ENCODE measurements at regions of chr9 and their contacts with region 1.

Region 1: GRCh38 chr9:115591584-115591984 is 473.6 kb upstream of the TNC start:
- DNase-seq: peak; percentile 95
- ATAC-seq: peak; percentile 90
- H3K4me3 ChIP-seq: no peak overlapping the region
- H3K27ac ChIP-seq: peak overlapping the region; percentile 87
- H3K4me1 ChIP-seq: peaks cover 47% of the 10 kb centered on the region
- H3K27me3 ChIP-seq: no peaks in the 10 kb centered on the region
- CTCF ChIP-seq: peak; percentile 88

Region 2: DNA sequence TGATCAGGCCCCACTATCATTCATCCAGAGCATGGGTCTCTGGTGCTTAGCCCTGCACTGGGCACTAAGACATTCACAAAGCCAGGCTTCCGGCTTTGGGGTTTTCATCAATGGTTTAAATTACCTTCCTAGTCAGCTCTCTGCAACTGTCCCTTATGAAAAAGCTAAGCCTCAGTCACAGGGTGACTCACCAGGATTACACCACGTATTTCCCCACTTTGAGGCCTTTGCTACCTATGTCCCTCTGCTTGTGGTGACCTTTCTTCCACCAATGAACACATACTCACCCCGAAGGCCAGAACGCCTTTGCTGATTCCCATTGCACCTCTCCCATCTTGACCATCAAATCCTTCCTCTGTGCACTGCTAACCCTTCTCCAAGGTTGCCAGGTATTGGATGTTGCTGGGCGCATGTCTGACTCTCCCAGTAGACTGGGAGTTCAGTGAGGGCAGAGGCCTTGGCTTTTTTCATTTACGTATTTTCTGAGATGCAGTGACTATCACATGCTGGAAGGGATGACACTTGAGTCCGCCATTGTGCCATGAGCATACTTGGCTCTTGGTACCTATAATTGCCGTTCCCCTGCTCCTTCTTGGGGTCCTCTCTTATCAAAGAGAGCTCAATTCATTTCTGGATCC is 602.5 kb before region 1 on chr9:
- CTCF ChIA-PET with region 1: no interaction called
- POLR2A ChIA-PET with region 1: no interaction called
- intact Hi-C with region 1: no loop called
- DNase-seq: peak; percentile 80
- ATAC-seq: peak; percentile 92
- H3K4me3 ChIP-seq: no peak overlapping the region
- H3K27ac ChIP-seq: peak overlapping the region; percentile 49
- H3K4me1 ChIP-seq: peaks cover 14% of the 10 kb centered on the region
- H3K27me3 ChIP-seq: no peaks in the 10 kb centered on the region
- CTCF ChIP-seq: no peak

Region 3: GRCh38 chr9:115540091-115540490 is 51.5 kb before region 1 on chr9:
- CTCF ChIA-PET with region 1: no interaction called
- POLR2A ChIA-PET with region 1: no interaction called
- intact Hi-C with region 1: no loop called
- DNase-seq: peak; percentile 5
- ATAC-seq: no peak
- H3K4me3 ChIP-seq: no peak overlapping the region
- H3K27ac ChIP-seq: no peak overlapping the region
- H3K4me1 ChIP-seq: no peaks in the 10 kb centered on the region
- H3K27me3 ChIP-seq: no peaks in the 10 kb centered on the region
- CTCF ChIP-seq: no peak

Region 4: GRCh38 chr9:115657695-115658094 is 66.1 kb after region 1 on chr9:
- CTCF ChIA-PET with region 1: no interaction called
- POLR2A ChIA-PET with region 1: no interaction called
- intact Hi-C with region 1: loop called (anchors 5 kb)
- DNase-seq: no peak
- ATAC-seq: peak; percentile 71
- H3K4me3 ChIP-seq: no peak overlapping the region
- H3K27ac ChIP-seq: no peak overlapping the region
- H3K4me1 ChIP-seq: no peaks in the 10 kb centered on the region
- H3K27me3 ChIP-seq: no peaks in the 10 kb centered on the region
- CTCF ChIP-seq: no peak

Region 5: GRCh38 chr9:115694014-115694413 is 102.4 kb after region 1 on chr9:
- CTCF ChIA-PET with region 1: no interaction called
- POLR2A ChIA-PET with region 1: interaction called, 3 read pairs
- intact Hi-C with region 1: loop called (anchors 2 kb)
- DNase-seq: peak; percentile 61
- ATAC-seq: no peak; the same call in 1 of the 2 replicates
- H3K4me3 ChIP-seq: no peak overlapping the region
- H3K27ac ChIP-seq: no peak overlapping the region
- H3K4me1 ChIP-seq: peaks cover 21% of the 10 kb centered on the region
- H3K27me3 ChIP-seq: no peaks in the 10 kb centered on the region
- CTCF ChIP-seq: peak; percentile 65

Region 6: DNA sequence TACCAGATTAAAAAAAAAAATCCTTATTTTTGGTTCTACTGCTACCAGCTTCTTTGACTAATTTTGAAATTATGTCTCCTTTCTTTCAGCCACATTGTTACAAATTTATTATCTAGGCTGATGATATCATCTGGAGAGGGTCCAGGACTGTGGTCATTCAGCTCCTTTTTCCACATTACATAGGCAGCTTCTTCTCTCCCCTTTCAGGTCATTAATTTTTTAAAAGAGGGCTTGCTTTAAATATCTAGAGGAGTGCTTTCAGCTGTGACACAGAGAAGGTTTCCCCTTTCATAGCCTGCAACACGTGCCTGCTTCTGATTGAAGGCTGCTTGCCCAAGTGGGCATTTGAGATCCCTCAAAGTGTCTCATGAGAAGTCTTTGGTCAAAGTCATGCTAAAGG is 406.3 kb after region 1 on chr9:
- CTCF ChIA-PET with region 1: no interaction called
- POLR2A ChIA-PET with region 1: no interaction called
- intact Hi-C with region 1: loop called (anchors 5 kb)
- DNase-seq: peak; percentile 54
- ATAC-seq: no peak
- H3K4me3 ChIP-seq: no peak overlapping the region
- H3K27ac ChIP-seq: peak overlapping the region; percentile 79
- H3K4me1 ChIP-seq: peaks cover 52% of the 10 kb centered on the region
- H3K27me3 ChIP-seq: no peaks in the 10 kb centered on the region
- CTCF ChIP-seq: no peak

Region 7: GRCh38 chr9:116288658-116289057 is 697.1 kb after region 1 on chr9:
- CTCF ChIA-PET with region 1: no interaction called
- POLR2A ChIA-PET with region 1: no interaction called
- intact Hi-C with region 1: loop called (anchors 5 kb)
- DNase-seq: peak; percentile 87
- ATAC-seq: no peak
- H3K4me3 ChIP-seq: no peak overlapping the region
- H3K27ac ChIP-seq: no peak overlapping the region
- H3K4me1 ChIP-seq: peaks cover 3% of the 10 kb centered on the region; the same call in 1 of the 2 replicates
- H3K27me3 ChIP-seq: peaks cover 7% of the 10 kb centered on the region; the same call in 1 of the 2 replicates
- CTCF ChIP-seq: no peak

Region 8: GRCh38 chr9:116572095-116572748 is 980.6 kb after region 1 on chr9:
- CTCF ChIA-PET with region 1: interaction called, 3 read pairs
- POLR2A ChIA-PET with region 1: no interaction called
- intact Hi-C with region 1: loop called (anchors 1 kb)
- DNase-seq: peak; percentile 59
- ATAC-seq: peak; percentile 85
- H3K4me3 ChIP-seq: no peak overlapping the region
- H3K27ac ChIP-seq: no peak overlapping the region
- H3K4me1 ChIP-seq: peaks cover 2% of the 10 kb centered on the region
- H3K27me3 ChIP-seq: no peaks in the 10 kb centered on the region
- CTCF ChIP-seq: peak; percentile 87

Region 9: GRCh38 chr9:116661037-116661954 is 1069.7 kb after region 1 on chr9:
- CTCF ChIA-PET with region 1: no interaction called
- POLR2A ChIA-PET with region 1: no interaction called
- intact Hi-C with region 1: loop called (anchors 2 kb)
- DNase-seq: peak; percentile 58
- ATAC-seq: peak; percentile 81
- H3K4me3 ChIP-seq: no peak overlapping the region
- H3K27ac ChIP-seq: no peak overlapping the region
- H3K4me1 ChIP-seq: peaks cover 7% of the 10 kb centered on the region; the same call in 1 of the 2 replicates
- H3K27me3 ChIP-seq: no peaks in the 10 kb centered on the region
- CTCF ChIP-seq: peak; percentile 78